Mammary epithelial cell (primary cell): ENCODE measurements at regions of chr14 and their contacts with region 1.

Region 1: GRCh38 chr14:100192672-100193416 is 33.4 kb upstream of the DEGS2 start:
- DNase-seq: peak; percentile 99
- H3K4me3 ChIP-seq: peak overlapping the region; percentile 36 to 59 (median 43)
- H3K27ac ChIP-seq: peak overlapping the region; percentile 66
- H3K4me1 ChIP-seq: peaks cover 13% of the 10 kb centered on the region
- H3K27me3 ChIP-seq: no peaks in the 10 kb centered on the region
- CTCF ChIP-seq: peak; percentile 61

Region 2: DNA sequence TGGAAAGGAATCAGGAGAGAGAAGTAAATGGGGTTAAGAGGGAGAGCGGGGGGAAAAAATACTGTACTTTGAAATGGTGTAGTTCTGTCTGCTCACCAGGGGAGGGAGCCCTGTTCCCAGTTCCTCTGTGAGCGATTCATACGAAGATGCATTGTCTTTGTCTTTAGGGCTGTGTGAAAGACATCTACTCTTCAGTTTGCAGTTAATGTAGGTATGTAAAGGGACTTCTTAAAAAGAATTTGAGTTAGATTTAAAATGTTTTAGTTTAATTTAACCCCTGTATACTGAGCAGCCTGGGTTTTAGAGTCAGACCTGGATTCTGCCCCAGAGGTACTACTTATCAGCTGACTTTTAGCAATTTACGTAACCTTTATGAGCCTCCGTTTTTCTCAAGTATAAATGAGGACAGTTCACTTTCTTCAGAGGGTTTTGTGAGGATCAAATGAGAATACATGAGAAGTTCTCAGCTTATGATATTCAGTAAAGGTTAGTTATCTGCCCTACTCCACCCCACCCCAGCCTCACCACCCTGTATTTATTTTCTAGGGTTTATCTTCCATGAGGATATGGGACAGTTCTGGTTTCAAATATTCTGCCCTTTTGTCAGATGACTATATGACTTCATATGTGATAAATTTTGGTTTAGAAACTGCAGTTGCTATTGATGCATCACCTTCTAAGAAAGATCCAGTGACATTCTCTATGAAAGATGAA is 210.2 kb before region 1 on chr14:
- CTCF ChIA-PET with region 1: no interaction called
- dilution Hi-C with region 1: no loop called
- in situ Hi-C with region 1: loop called in 1 of 2 experiments (anchors 10 kb)
- intact Hi-C with region 1: loop called (anchors 1 kb)
- DNase-seq: peak; percentile 42
- H3K4me3 ChIP-seq: no peak overlapping the region
- H3K27ac ChIP-seq: no peak overlapping the region
- H3K4me1 ChIP-seq: peaks cover 3% of the 10 kb centered on the region
- H3K27me3 ChIP-seq: no peaks in the 10 kb centered on the region
- CTCF ChIP-seq: peak; percentile 83 to 92

Region 3: GRCh38 chr14:100067971-100068959 is 124.6 kb before region 1 on chr14:
- CTCF ChIA-PET with region 1: interaction called, 5 read pairs
- dilution Hi-C with region 1: no loop called
- in situ Hi-C with region 1: loop called (anchors 25 kb)
- intact Hi-C with region 1: loop called (anchors 1 kb)
- DNase-seq: peak; percentile 79
- H3K4me3 ChIP-seq: no peak overlapping the region
- H3K27ac ChIP-seq: peak overlapping the region; percentile 37
- H3K4me1 ChIP-seq: peaks cover 26% of the 10 kb centered on the region
- H3K27me3 ChIP-seq: no peaks in the 10 kb centered on the region
- CTCF ChIP-seq: no peak

Region 4: GRCh38 chr14:100108042-100108825 is 84.6 kb before region 1 on chr14:
- CTCF ChIA-PET with region 1: interaction called, 3 read pairs
- dilution Hi-C with region 1: no loop called
- in situ Hi-C with region 1: no loop called
- intact Hi-C with region 1: loop called (anchors 1 kb)
- DNase-seq: peak; percentile 58
- H3K4me3 ChIP-seq: no peak overlapping the region
- H3K27ac ChIP-seq: peak overlapping the region; percentile 55
- H3K4me1 ChIP-seq: peaks cover 27% of the 10 kb centered on the region
- H3K27me3 ChIP-seq: no peaks in the 10 kb centered on the region
- CTCF ChIP-seq: peak; percentile 75 to 96

Region 5: GRCh38 chr14:100239840-100240724 is 47.2 kb after region 1 on chr14:
- CTCF ChIA-PET with region 1: no interaction called
- dilution Hi-C with region 1: no loop called
- in situ Hi-C with region 1: no loop called
- intact Hi-C with region 1: loop called (anchors 1 kb)
- DNase-seq: peak; percentile 93
- H3K4me3 ChIP-seq: peak overlapping the region; percentile 66 to 81 (median 77)
- H3K27ac ChIP-seq: peak overlapping the region; percentile 79
- H3K4me1 ChIP-seq: peaks cover 13% of the 10 kb centered on the region
- H3K27me3 ChIP-seq: no peaks in the 10 kb centered on the region
- CTCF ChIP-seq: peak; percentile 21 to 59

Region 6: DNA sequence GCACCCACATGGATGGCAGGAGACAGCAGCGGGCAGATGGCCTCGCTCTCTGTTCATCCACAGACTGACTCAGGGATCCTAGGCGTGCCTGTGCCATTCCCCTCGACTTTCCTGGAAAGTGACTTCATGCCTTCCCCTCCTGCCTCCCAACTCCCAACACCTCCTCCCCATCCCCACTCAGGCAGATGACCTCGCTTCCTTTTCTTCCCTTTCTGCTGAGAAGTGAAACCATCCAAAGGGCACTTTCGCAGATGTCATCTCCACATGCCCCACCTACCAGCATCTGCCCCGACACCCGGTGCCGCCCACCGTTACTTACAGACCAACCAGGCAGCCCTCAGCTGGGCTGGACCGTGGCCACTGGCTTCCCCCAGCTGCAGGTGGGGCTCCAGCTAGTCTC is 364.8 kb after region 1 on chr14:
- CTCF ChIA-PET with region 1: no interaction called
- dilution Hi-C with region 1: no loop called
- in situ Hi-C with region 1: no loop called
- intact Hi-C with region 1: no loop called
- DNase-seq: no peak
- H3K4me3 ChIP-seq: no peak overlapping the region
- H3K27ac ChIP-seq: no peak overlapping the region
- H3K4me1 ChIP-seq: peaks cover 5% of the 10 kb centered on the region
- H3K27me3 ChIP-seq: no peaks in the 10 kb centered on the region
- CTCF ChIP-seq: no peak

Region 7: DNA sequence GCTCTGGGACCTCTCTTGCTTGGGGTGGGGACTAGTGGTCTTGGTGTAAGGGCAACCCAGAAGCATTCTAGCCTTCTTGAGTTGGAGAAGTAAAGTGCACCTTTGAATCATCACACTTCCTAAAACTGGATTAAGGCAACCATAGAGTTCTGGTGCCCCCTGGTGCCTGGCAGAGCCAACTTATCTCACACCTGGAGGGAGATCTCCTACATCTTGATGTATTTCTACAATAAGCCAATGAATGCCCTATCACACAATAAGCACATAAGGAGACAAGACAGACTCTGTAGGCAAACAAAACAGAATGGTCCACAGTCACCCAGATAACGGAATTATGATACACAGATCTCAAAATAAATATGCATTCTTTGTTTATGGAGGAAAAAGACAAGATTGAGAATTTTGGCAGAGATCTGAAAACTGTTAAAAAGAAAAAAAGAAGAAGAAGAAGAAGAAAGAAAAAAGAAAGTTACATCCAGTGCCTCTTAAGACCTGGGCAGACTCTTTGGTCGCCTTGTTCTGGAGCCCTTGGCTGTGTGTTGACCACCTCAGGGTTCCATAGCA is 1472.8 kb after region 1 on chr14:
- CTCF ChIA-PET with region 1: no interaction called
- dilution Hi-C with region 1: no loop called
- in situ Hi-C with region 1: no loop called
- intact Hi-C with region 1: loop called (anchors 5 kb)
- DNase-seq: peak; percentile 52
- H3K4me3 ChIP-seq: no peak overlapping the region
- H3K27ac ChIP-seq: no peak overlapping the region
- H3K4me1 ChIP-seq: no peaks in the 10 kb centered on the region
- H3K27me3 ChIP-seq: no peaks in the 10 kb centered on the region
- CTCF ChIP-seq: peak; percentile 70 to 84